Activated CD4-positive, alpha-beta memory T cell treated with anti-CD3 and anti-CD28 coated beads, Interleukin-2, amount 10 ng/mL, durations not matched to agents 7 days and 5 days (primary cell): ENCODE measurements at regions of chr11 and their contacts with region 1.

Region 1: GRCh38 chr11:75248690-75249268 is 8.2 kb downstream of the TPBGL start:
- DNase-seq: peak; percentile 88
- H3K4me3 Mint-ChIP-seq: no peak overlapping the region
- H3K27ac Mint-ChIP-seq: no peak overlapping the region
- H3K4me1 Mint-ChIP-seq: no peaks in the 10 kb centered on the region
- H3K27me3 Mint-ChIP-seq: peaks cover 55% of the 10 kb centered on the region

Region 2: GRCh38 chr11:75022759-75023396 is 225.9 kb before region 1 on chr11:
- CTCF ChIA-PET with region 1: interaction called, 49 read pairs
- POLR2A ChIA-PET with region 1: no interaction called
- DNase-seq: peak; percentile 79
- H3K4me3 Mint-ChIP-seq: no peak overlapping the region
- H3K27ac Mint-ChIP-seq: no peak overlapping the region
- H3K4me1 Mint-ChIP-seq: no peaks in the 10 kb centered on the region
- H3K27me3 Mint-ChIP-seq: no peaks in the 10 kb centered on the region

Region 3: DNA sequence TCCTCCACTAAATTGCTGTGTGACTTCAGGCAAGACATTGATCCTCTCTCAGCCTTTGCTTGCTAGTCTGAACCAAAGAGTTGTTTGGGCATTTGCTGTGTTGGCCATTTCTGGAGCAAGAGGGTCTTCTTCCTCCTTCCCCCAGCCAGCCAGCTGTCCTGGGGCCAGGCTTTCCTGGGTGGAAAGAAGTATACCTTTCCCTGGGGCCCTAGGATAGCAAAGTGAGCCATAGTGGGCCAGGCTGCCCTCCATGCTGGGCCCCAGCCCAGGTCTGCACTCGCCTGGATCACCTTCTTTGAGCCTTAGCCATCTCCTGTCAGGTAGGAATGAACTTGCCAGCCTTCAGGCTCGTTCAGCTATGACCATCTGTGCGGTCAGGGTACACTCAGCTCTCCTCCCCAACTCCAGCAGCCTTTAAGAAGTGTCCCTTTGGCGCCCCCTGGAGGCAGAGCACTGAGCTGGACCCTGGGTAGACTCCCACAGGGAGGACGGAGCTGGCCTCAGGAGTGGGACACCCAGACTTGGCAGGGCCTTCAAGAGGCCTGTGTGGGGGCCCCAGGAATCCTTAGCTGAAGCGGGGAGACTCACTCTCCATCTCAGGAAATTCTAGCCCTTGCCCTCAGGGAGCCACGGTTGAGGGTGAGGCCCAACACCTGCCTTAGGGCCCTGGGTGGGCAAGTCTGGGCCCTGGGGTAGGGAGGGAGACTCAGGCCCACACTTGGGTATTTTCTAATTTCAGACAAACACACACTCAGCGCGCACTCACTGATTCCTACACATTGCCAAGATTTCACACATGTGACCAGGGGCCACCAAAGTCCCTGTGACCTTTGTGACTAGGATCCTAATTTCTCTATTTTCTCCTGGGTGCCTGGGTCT is 43.9 kb before region 1 on chr11:
- CTCF ChIA-PET with region 1: interaction called, 17 read pairs
- POLR2A ChIA-PET with region 1: no interaction called
- DNase-seq: peak; percentile 87
- H3K4me3 Mint-ChIP-seq: no peak overlapping the region
- H3K27ac Mint-ChIP-seq: no peak overlapping the region
- H3K4me1 Mint-ChIP-seq: no peaks in the 10 kb centered on the region
- H3K27me3 Mint-ChIP-seq: peaks cover 6% of the 10 kb centered on the region

Region 4: DNA sequence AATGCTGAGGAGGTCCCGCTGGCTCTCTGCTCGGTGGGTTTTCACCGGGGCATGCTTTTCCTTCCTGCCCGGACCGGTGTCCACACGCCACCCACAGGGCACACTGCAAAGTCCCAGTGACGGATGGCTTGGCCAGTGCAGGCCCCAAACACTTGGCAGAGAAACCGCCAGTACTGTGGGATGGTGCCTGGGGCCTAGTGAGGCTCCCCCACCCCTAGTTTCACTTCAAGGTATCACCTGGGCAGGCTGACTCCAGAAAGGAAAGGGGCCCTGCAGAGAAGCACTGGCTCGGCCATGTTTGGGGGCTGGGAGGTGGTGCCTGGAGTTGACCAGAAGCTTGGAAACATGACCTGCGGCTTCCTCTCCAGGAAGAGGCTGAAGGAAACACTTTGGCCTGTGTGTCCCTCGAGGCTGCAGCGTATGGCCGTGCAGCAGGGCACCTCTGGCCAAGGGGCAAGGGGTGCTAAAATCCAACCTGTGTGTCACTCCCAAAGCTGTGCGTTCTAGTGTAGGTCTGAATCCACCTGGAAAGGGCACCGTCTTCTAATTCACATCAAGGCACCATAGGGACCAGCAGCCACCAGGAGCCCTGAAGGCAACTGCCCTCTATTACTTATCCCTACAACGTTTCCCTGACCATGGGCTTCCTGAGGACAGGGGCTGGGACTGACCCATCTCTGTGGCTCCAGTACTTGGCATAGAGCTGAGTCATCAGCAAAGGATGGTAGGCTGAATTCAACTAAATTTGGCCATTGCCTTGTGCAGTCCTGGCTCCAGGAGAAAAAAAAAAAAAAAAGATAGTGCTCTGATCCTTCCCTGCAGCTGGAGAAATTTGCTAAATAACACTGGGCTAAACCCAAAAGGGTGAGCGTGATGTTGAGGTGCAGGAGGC is 14.4 kb after region 1 on chr11:
- CTCF ChIA-PET with region 1: interaction called, 12 read pairs
- POLR2A ChIA-PET with region 1: interaction called, 3 read pairs
- DNase-seq: no peak
- H3K4me3 Mint-ChIP-seq: no peak overlapping the region
- H3K27ac Mint-ChIP-seq: no peak overlapping the region
- H3K4me1 Mint-ChIP-seq: peaks cover 21% of the 10 kb centered on the region
- H3K27me3 Mint-ChIP-seq: no peaks in the 10 kb centered on the region